ENCODE measurements at regions of chr16 and their contacts with region 1.

Region 1: GRCh38 chr16:28277537-28278388 is 14.6 kb upstream of the SBK1 start:
- DNase-seq: peak; percentile 78 to 86
- H3K4me3 ChIP-seq: peak overlapping the region; percentile 18 to 75 (median 51)
- H3K27ac ChIP-seq: no peak overlapping the region
- H3K4me1 ChIP-seq: no peaks in the 10 kb centered on the region
- H3K27me3 ChIP-seq: peaks cover 0 to 7% of the 10 kb centered on the region in 2 donors
- CTCF ChIP-seq: peak; percentile 83 to 96 (median 92)
- POLR2A ChIP-seq: no peak

Region 2: DNA sequence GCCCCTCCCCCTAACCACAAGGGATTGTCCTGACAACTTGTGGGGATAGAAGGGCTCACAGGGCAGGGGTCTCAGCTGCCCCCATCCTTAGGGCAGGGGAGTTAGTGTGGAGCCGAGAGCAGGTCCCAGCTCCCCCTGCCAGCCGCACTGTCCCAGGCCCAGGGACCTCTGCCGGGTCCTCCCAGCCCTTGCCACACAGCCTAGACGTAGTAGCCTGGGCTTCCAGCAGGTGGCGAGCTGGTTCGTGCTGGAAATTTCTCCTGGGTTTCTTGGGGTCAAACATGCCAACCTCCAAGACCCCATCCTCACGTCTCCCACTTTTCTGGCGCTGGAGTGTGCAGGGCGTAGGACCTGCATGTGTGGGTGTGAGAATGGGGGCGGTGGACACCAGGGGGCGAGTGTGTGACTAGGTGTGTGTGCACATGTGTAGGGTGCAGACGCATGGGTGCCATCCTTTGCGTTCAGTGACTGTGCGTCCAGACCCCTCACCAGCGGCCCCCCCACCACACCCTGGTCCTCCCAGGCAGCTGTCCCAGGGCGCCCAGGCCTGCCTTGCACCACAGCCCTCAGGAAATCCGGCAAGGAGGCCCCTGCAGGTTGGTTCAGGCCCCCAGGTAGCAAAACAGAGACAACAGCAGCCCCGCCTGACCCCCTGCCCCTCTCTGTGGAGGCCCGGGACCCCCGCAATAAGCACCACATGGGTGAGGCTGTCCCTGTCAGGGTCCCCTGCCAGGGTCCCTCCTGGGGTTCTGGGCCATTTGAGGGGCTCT is 44.1 kb after region 1 on chr16:
- intact Hi-C with region 1: loop called (anchors 5 kb)
- DNase-seq: no peak
- H3K4me3 ChIP-seq: no peak overlapping the region
- H3K27ac ChIP-seq: no peak overlapping the region
- H3K4me1 ChIP-seq: no peaks in the 10 kb centered on the region
- H3K27me3 ChIP-seq: no peaks in the 10 kb centered on the region
- CTCF ChIP-seq: peak in 2 of 3 donors; percentile 49 to 54
- POLR2A ChIP-seq: no peak